Activated CD8-positive, alpha-beta T cell treated with anti-CD3 and anti-CD28 coated beads for 36 hours (primary cell): ENCODE measurements at regions of chr6 and their contacts with region 1.

Region 1: DNA sequence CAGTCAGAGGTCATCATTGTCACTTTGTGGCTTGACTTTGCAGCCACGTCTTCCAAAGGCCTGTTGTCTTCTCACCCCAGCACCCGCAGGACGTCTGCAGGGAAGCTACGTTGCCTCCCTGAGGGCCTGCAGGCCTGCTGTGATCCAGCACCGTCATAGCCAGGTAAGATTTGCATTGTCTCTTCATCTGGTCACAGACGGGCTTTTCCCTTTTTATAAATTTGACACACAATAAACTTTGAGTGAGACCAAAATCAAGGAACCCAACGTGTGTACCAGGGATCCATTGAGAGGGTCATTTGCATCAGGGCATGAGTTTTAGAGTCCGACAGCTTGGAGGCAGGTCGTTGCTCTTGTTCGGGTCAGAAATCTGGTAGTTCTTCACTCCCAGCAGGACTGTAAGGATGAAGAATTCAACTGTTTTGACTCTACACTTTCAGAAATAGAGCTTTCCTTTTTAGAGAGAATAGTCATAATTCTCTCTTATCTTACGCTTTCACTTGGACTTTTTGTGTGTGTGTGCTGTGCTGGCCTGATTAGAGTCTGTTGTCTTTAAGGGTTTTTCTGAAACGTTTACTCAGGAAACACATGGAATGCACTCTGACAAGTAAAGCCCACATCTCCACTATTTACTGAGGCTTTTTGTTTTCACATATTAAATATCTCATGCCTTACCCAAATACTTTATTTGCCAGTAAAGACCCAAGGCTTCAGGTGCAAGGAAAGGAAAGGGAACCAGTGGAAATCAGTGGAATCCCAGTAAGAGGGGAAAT is 177.2 kb upstream of the TAB2 start:
- DNase-seq: peak; percentile 85
- ATAC-seq: peak; percentile 85
- H3K4me3 Mint-ChIP-seq: peak overlapping the region; percentile 56
- H3K27ac Mint-ChIP-seq: peak overlapping the region; percentile 97
- H3K4me1 Mint-ChIP-seq: peaks cover 48% of the 10 kb centered on the region
- H3K27me3 Mint-ChIP-seq: no peaks in the 10 kb centered on the region
- CTCF ChIP-seq: no peak

Region 2: DNA sequence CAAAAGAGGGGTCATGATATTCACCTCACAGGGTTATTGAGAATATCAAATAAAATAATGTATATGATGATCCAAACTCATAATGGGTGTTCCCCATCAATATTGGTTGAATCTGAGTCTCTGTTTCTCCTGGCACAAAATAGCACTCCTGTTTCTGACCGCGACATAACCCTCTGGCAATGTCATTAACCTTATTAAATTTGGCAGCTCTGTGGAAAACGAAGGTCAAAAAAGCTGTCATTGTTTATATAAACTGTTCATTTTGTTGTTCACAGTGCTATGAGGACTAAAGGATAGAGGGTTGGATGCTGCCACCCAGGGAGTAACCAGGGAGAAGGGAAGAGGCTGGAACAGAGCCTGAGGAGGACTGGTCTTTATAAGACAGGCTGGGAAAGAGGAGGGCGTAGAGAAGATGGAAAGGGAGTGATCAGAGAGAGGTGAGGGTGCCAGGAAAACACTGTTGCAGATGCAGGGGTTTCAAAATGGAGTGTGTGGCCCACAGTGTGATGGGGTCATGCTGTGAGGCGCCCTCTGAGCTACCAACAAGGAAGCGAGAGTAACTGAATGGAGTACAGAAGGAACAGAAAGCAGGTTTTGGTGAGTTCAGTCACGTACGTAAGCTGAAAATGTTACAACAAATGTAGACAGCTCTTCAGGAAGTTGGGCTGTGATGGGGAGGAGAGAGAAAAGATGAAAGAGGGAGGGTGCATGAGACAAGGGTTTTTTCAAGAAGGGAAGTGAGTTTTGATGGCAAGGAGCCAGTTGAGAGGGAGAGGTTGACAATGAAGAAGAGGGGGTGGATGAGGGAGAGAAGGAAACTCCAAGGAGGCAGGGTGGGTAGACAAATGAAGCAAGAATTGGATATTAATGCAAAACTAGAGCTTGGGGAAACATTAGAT is 74.4 kb before region 1 on chr6:
- CTCF ChIA-PET with region 1: no interaction called
- POLR2A ChIA-PET with region 1: no interaction called
- intact Hi-C with region 1: no loop called
- DNase-seq: peak; percentile 69
- ATAC-seq: peak; percentile 97
- H3K4me3 Mint-ChIP-seq: peak overlapping the region; percentile 3
- H3K27ac Mint-ChIP-seq: peak overlapping the region; percentile 85
- H3K4me1 Mint-ChIP-seq: peaks cover 32% of the 10 kb centered on the region
- H3K27me3 Mint-ChIP-seq: no peaks in the 10 kb centered on the region
- CTCF ChIP-seq: no peak

Region 3: GRCh38 chr6:149082286-149082707 is 58.0 kb before region 1 on chr6:
- CTCF ChIA-PET with region 1: interaction called, 3 read pairs
- POLR2A ChIA-PET with region 1: interaction called, 13 read pairs
- intact Hi-C with region 1: no loop called
- DNase-seq: peak; percentile 97
- ATAC-seq: peak; percentile 86
- H3K4me3 Mint-ChIP-seq: no peak overlapping the region
- H3K27ac Mint-ChIP-seq: no peak overlapping the region
- H3K4me1 Mint-ChIP-seq: peaks cover 50% of the 10 kb centered on the region
- H3K27me3 Mint-ChIP-seq: no peaks in the 10 kb centered on the region
- CTCF ChIP-seq: peak; percentile 81

Region 4: DNA sequence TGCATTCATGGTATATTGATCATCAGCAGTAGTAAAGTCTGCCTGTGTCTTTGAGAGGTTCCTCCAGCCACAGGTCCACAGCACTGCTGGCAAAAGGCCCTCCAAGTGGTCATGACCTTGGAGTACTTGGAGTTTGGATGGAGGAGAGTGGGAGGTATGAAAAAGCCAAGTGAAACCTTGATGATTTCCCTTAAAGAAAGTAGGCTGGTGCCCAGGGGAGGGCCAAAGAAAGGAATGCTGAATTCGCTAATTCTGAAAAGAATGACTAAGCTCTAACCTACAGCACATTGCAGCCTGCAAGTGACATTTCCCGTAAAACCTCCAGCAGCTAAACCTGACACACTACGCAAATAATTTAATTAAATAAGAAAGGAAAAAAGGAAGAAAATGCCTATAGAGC is 46.2 kb before region 1 on chr6:
- CTCF ChIA-PET with region 1: interaction called, 5 read pairs
- POLR2A ChIA-PET with region 1: interaction called, 7 read pairs
- intact Hi-C with region 1: loop called (anchors 5 kb)
- DNase-seq: peak; percentile 23
- ATAC-seq: no peak
- H3K4me3 Mint-ChIP-seq: peak overlapping the region; percentile 62
- H3K27ac Mint-ChIP-seq: peak overlapping the region; percentile 96
- H3K4me1 Mint-ChIP-seq: peaks cover 50% of the 10 kb centered on the region
- H3K27me3 Mint-ChIP-seq: no peaks in the 10 kb centered on the region
- CTCF ChIP-seq: no peak

Region 5: GRCh38 chr6:149211046-149211571 is 70.8 kb after region 1 on chr6:
- CTCF ChIA-PET with region 1: no interaction called
- POLR2A ChIA-PET with region 1: interaction called, 3 read pairs
- intact Hi-C with region 1: loop called (anchors 2 kb)
- DNase-seq: peak; percentile 61
- ATAC-seq: peak; percentile 69
- H3K4me3 Mint-ChIP-seq: peak overlapping the region; percentile 17
- H3K27ac Mint-ChIP-seq: no peak overlapping the region
- H3K4me1 Mint-ChIP-seq: peaks cover 3% of the 10 kb centered on the region
- H3K27me3 Mint-ChIP-seq: no peaks in the 10 kb centered on the region
- CTCF ChIP-seq: no peak

Region 6: DNA sequence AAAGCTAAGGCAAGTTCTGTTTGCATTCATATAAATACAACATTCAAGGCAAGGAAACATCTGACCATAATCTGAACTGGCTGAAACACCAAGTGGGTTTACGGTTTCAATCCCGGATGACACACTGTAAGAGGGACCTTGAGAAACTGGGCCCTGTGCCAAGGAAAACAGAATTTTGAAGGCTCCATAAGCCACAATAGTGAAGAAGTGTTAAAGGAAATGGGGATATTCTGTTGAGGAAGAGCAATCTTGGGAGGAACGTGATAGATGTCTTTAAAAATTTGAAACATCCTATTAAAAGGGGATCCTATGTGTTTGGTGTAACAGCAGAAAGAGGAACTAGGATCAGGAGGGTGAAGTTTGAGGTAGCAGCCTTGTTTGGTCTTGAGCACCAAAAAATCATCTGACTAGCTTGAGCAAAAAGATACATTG is 94.8 kb after region 1 on chr6:
- CTCF ChIA-PET with region 1: no interaction called
- POLR2A ChIA-PET with region 1: interaction called, 4 read pairs
- intact Hi-C with region 1: loop called (anchors 1 kb)
- DNase-seq: no peak
- ATAC-seq: no peak
- H3K4me3 Mint-ChIP-seq: peak overlapping the region; percentile 59
- H3K27ac Mint-ChIP-seq: peak overlapping the region; percentile 94
- H3K4me1 Mint-ChIP-seq: peaks cover 51% of the 10 kb centered on the region
- H3K27me3 Mint-ChIP-seq: no peaks in the 10 kb centered on the region
- CTCF ChIP-seq: no peak

Region 7: GRCh38 chr6:149468179-149468578 is 327.9 kb after region 1 on chr6:
- CTCF ChIA-PET with region 1: no interaction called
- POLR2A ChIA-PET with region 1: no interaction called
- intact Hi-C with region 1: no loop called
- DNase-seq: no peak
- ATAC-seq: no peak
- H3K4me3 Mint-ChIP-seq: no peak overlapping the region
- H3K27ac Mint-ChIP-seq: peak overlapping the region; percentile 60
- H3K4me1 Mint-ChIP-seq: peaks cover 42% of the 10 kb centered on the region
- H3K27me3 Mint-ChIP-seq: no peaks in the 10 kb centered on the region
- CTCF ChIP-seq: no peak